ENCODE measurements at regions of chr13 and their contacts with region 1.

Region 1: DNA sequence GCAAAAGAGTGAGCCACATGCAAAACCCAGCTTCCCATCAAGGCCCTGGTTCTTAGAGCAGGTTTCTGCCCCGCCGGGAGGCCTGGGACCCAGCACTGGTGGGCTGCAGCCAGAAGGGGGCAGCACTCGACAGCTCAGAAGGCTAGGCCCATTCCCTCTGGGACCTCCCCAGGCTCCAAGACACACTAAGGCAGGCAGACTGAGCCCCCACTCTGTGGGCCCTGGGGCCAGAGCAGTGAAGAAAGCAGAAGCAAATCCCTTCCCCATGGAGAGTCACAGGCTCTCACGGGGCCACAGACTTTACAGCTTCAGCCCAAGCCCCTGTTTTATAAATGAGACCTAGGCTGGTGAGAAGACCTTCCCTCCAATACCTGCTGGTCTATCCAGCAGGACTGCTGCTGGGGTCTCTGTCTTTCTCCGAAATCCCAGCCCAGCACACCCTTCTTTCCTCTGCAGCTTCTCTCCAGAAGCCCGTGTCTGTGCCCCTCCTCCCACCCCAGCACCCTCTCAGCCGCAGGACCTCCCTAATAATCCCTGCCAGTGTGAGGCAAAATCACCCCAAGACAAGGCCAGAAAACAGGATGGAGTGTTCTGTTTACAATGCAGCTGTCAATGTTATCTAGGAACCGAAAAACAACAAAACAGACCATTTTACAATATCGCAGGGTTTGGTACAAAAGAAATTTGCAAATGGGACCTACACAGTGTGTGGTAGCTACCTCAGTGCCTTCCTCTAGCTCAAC is 109.3 kb downstream of the ABCC4 start:
- DNase-seq: peak; percentile 45
- ATAC-seq: peak; percentile 99
- H3K4me3 ChIP-seq: no peak overlapping the region
- H3K27ac ChIP-seq: peak overlapping the region; percentile 20; the same call in 1 of the 2 replicates
- H3K4me1 ChIP-seq: peaks cover 4% of the 10 kb centered on the region; the same call in 1 of the 2 replicates
- H3K27me3 ChIP-seq: no peaks in the 10 kb centered on the region
- CTCF ChIP-seq: peak; percentile 94 to 98 (median 97)
- EP300 ChIP-seq: no peak
- POLR2A ChIP-seq: no peak
- RAD21 ChIP-seq: peak; percentile 92

Region 2: DNA sequence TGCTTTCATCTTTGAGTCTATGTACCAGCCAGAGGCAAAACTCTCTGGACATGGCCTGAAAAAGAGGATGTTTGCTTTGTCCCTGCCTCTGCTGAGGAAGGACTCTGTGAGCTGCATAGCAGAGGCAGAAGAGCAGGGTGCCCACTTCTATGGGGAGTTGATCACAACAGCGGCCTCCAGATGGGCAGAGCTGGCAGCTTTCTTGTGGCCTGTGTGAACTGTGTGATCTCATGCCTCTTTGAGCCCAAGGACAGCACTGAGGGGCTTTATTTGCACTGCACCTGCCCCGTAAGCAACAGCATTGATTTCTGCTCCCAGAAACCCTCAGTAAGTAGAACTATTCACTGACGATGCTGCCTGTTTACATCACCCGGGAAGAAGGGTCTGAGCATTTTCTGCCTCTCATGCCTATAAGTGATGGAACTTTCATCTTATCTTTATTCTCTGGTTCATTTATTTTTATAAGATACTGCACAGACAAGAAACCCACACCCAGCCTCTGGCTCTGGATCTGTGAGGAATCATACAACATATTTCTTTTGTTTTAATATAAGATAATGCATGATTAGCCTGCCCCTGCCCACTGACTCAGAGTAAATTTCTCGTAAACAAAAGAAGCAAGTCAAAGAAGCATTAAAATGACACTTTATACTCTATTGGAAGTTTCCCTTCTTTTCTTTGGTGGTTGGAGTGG is 235.4 kb before region 1 on chr13:
- CTCF ChIA-PET with region 1: no interaction called
- POLR2A ChIA-PET with region 1: no interaction called
- RAD21 ChIA-PET with region 1: no interaction called
- SMC1A ChIA-PET with region 1: no interaction called
- in situ Hi-C with region 1: no loop called
- intact Hi-C with region 1: no loop called
- DNase-seq: no peak
- ATAC-seq: no peak
- H3K4me3 ChIP-seq: no peak overlapping the region
- H3K27ac ChIP-seq: no peak overlapping the region
- H3K4me1 ChIP-seq: no peaks in the 10 kb centered on the region
- H3K27me3 ChIP-seq: no peaks in the 10 kb centered on the region
- CTCF ChIP-seq: no peak
- EP300 ChIP-seq: no peak
- POLR2A ChIP-seq: no peak
- RAD21 ChIP-seq: no peak

Region 3: DNA sequence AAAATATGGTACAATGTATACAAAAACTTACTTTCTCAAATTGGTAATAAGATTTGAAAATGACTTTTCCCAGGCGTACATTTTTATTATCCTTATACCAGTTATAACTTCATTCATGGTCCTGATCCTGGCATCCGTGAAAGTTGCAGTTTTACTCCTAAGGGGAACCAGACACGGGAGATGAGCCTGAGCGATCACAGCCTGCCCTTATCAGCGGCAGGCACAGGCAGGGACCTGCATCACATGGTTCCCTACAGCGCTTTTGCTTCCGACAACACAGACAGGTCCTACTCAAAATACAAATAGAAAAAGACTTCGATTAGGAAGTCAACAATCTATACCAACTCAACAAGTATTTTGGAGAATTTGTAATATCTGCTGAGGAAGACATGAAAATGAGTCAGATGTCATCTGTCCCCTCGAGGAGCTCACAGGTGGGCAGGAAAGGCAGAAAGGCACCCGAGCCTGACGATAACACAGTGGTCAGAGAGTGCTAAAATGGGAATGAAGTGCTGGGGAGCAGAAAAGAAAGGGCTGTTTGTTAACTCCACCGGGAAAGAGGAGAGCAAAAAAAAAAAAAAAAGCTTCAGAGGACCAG is 15.9 kb after region 1 on chr13:
- CTCF ChIA-PET with region 1: interaction called, 13 read pairs
- POLR2A ChIA-PET with region 1: no interaction called
- RAD21 ChIA-PET with region 1: interaction called, 10 read pairs
- SMC1A ChIA-PET with region 1: interaction called, 8 read pairs
- in situ Hi-C with region 1: no loop called
- intact Hi-C with region 1: no loop called
- DNase-seq: no peak
- ATAC-seq: peak; percentile 95
- H3K4me3 ChIP-seq: peak overlapping the region; percentile 58; the same call in 1 of the 2 replicates
- H3K27ac ChIP-seq: peak overlapping the region; percentile 59
- H3K4me1 ChIP-seq: peaks cover 8% of the 10 kb centered on the region
- H3K27me3 ChIP-seq: no peaks in the 10 kb centered on the region
- CTCF ChIP-seq: no peak
- EP300 ChIP-seq: no peak
- POLR2A ChIP-seq: no peak
- RAD21 ChIP-seq: no peak

Region 4: DNA sequence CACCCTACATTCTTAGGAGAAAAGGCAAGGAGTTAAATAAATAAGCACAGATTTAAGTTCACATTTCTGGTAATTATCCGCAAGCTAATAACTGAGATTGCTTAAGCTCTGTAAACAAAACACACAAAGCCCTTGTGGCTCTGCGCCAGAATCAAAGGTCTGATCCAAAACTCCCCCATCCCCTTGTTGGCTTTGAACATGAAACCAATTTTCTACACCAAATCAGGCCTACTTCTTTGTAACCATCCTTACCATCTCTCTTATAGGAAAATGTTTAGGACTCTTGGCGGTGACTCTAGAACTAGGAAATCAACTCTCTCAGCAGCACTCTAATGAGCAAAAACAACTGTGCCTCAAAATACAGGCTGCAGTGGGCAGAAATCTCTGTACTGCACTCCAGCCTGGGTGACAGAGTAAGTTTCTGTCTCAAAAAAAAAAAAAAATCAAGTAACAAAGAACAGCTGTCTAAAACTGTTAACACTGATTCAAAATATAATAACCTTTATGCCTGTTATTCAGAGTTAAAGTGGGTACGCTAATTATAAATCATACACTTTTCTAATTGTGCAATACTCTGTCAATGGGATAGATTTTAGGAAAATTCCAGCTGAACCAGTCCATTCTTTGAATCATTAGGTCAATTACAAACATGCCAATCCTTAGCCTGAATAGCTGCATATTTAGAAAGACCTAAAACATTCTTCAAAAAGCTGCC is 83.5 kb after region 1 on chr13:
- CTCF ChIA-PET with region 1: interaction called, 14 read pairs
- POLR2A ChIA-PET with region 1: no interaction called
- RAD21 ChIA-PET with region 1: interaction called, 5 read pairs
- SMC1A ChIA-PET with region 1: interaction called, 5 read pairs
- in situ Hi-C with region 1: no loop called
- intact Hi-C with region 1: no loop called
- DNase-seq: no peak
- ATAC-seq: no peak
- H3K4me3 ChIP-seq: no peak overlapping the region
- H3K27ac ChIP-seq: peak overlapping the region; percentile 29; the same call in 1 of the 2 replicates
- H3K4me1 ChIP-seq: peaks cover 20% of the 10 kb centered on the region
- H3K27me3 ChIP-seq: no peaks in the 10 kb centered on the region
- CTCF ChIP-seq: no peak
- EP300 ChIP-seq: no peak
- POLR2A ChIP-seq: no peak
- RAD21 ChIP-seq: no peak

Region 5: DNA sequence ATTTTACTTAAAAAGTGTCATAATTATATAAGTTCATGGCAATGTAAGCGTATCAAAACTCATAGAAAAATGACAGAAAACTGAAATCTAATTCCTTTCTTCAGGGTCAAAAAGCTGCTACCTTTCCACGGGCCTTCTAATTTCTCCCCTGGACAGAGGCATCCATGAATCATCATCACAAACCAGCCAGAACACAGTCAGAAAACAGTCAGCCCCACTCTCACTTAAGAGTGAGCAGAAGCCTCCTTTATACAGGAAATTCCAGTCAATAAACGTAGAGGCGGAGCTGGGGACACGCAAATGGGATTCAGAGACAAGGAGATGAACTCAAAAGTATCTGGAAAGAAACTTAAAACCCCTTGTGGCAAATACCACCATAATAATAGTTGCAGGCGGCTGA is 163.5 kb after region 1 on chr13:
- CTCF ChIA-PET with region 1: interaction called, 10 read pairs
- POLR2A ChIA-PET with region 1: no interaction called
- RAD21 ChIA-PET with region 1: interaction called, 6 read pairs
- SMC1A ChIA-PET with region 1: no interaction called
- in situ Hi-C with region 1: no loop called
- intact Hi-C with region 1: no loop called
- DNase-seq: no peak
- ATAC-seq: no peak
- H3K4me3 ChIP-seq: no peak overlapping the region
- H3K27ac ChIP-seq: no peak overlapping the region
- H3K4me1 ChIP-seq: no peaks in the 10 kb centered on the region
- H3K27me3 ChIP-seq: no peaks in the 10 kb centered on the region
- CTCF ChIP-seq: no peak
- EP300 ChIP-seq: no peak
- POLR2A ChIP-seq: no peak
- RAD21 ChIP-seq: no peak

Region 6: DNA sequence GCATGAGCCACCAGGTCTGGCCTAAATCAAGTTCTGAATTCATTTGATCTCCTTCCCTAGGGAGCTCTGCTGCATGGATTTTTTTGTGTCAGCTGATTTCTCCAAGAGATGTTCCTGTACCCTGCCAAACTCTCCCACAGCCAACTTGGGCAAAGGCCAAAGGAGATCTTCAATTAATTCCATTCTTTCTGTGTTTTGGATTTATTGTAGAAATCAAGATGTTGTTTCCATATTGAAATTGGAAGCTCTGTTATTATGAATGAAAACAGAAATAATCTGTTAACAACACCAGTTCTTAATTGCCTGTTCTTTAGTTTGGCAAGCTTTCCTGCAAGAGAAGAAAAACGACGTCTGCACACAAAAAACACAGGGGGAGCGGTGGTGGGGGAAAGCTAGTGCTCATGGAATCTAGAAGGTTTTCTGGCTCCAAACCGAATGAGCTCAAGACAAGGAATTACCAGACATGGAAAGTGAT is 195.8 kb after region 1 on chr13:
- CTCF ChIA-PET with region 1: interaction called, 512 read pairs
- POLR2A ChIA-PET with region 1: interaction called, 4 read pairs
- RAD21 ChIA-PET with region 1: interaction called, 222 read pairs
- SMC1A ChIA-PET with region 1: interaction called, 229 read pairs
- in situ Hi-C with region 1: no loop called
- intact Hi-C with region 1: no loop called
- DNase-seq: no peak
- ATAC-seq: no peak
- H3K4me3 ChIP-seq: peak overlapping the region; percentile 29; the same call in 1 of the 2 replicates
- H3K27ac ChIP-seq: peak overlapping the region; percentile 56
- H3K4me1 ChIP-seq: peaks cover 28% of the 10 kb centered on the region
- H3K27me3 ChIP-seq: no peaks in the 10 kb centered on the region
- CTCF ChIP-seq: no peak
- EP300 ChIP-seq: no peak
- POLR2A ChIP-seq: no peak
- RAD21 ChIP-seq: no peak

Region 7: GRCh38 chr13:95834134-95834765 is 642.3 kb after region 1 on chr13:
- CTCF ChIA-PET with region 1: interaction called, 10 read pairs
- POLR2A ChIA-PET with region 1: no interaction called
- RAD21 ChIA-PET with region 1: no interaction called
- SMC1A ChIA-PET with region 1: no interaction called
- in situ Hi-C with region 1: no loop called
- intact Hi-C with region 1: no loop called
- DNase-seq: peak; percentile 28
- ATAC-seq: peak; percentile 97
- H3K4me3 ChIP-seq: no peak overlapping the region
- H3K27ac ChIP-seq: no peak overlapping the region
- H3K4me1 ChIP-seq: no peaks in the 10 kb centered on the region
- H3K27me3 ChIP-seq: no peaks in the 10 kb centered on the region
- CTCF ChIP-seq: peak; percentile 89 to 98 (median 94)
- EP300 ChIP-seq: no peak
- POLR2A ChIP-seq: no peak
- RAD21 ChIP-seq: peak; percentile 96